HCT116 (cell line): ENCODE measurements at regions of chr22 and their contacts with region 1.

Region 1: DNA sequence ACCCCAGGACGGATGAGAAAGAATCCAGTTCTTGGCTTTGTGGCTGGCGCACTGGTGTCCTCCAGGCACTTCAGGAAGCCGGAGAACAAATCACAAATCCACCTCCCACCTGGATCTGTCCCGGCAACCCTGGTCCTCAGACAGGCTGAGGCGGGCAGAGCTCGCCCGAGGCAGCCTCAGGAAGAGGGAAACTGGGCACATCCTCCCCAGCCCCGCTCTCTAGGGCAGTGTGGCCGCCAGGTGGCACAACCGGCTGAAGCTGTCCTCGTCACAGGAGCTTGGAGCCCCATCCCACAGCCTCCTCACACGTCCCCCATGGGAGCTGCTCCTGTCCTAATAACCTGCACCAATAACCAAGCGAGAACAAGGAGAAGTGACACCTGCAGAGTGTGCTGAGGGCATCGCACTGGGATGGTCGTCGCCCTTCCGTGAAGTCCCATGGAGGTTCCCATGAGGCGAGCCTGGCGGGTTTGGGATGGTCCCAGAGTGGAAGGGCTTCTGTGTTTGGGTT is 393.5 kb downstream of the BRD1 start:
- DNase-seq: no peak
- ATAC-seq: peak; percentile 91
- H3K4me3 ChIP-seq: no peak overlapping the region
- H3K27ac ChIP-seq: no peak overlapping the region
- H3K4me1 ChIP-seq: no peaks in the 10 kb centered on the region
- H3K27me3 ChIP-seq: peaks cover 3% of the 10 kb centered on the region; the same call in 1 of the 2 replicates
- CTCF ChIP-seq: peak; percentile 33 to 48 (median 48); a peak in 5 of 6 replicates
- POLR2A ChIP-seq: no peak
- RAD21 ChIP-seq: peak; percentile 60

Region 2: GRCh38 chr22:49372530-49373288 is 61.4 kb before region 1 on chr22:
- CTCF ChIA-PET with region 1: no interaction called
- POLR2A ChIA-PET with region 1: no interaction called
- RAD21 ChIA-PET with region 1: no interaction called
- intact Hi-C with region 1: no loop called
- DNase-seq: peak; percentile 83
- ATAC-seq: peak; percentile 97
- H3K4me3 ChIP-seq: peak overlapping the region; percentile 35 to 48
- H3K27ac ChIP-seq: peak overlapping the region; percentile 77
- H3K4me1 ChIP-seq: peaks cover 23 to 35% of the 10 kb centered on the region in 2 experiments
- H3K27me3 ChIP-seq: no peaks in the 10 kb centered on the region
- CTCF ChIP-seq: no peak
- POLR2A ChIP-seq: no peak
- RAD21 ChIP-seq: no peak; the same call in 1 of the 2 replicates

Region 3: GRCh38 chr22:49394116-49394785 is 39.9 kb before region 1 on chr22:
- CTCF ChIA-PET with region 1: no interaction called
- POLR2A ChIA-PET with region 1: no interaction called
- RAD21 ChIA-PET with region 1: no interaction called
- intact Hi-C with region 1: no loop called
- DNase-seq: peak; percentile 12
- ATAC-seq: peak; percentile 59
- H3K4me3 ChIP-seq: no peak overlapping the region
- H3K27ac ChIP-seq: no peak overlapping the region
- H3K4me1 ChIP-seq: peaks cover 0 to 5% of the 10 kb centered on the region in 2 experiments; a peak in 2 of 4 replicates
- H3K27me3 ChIP-seq: no peaks in the 10 kb centered on the region
- CTCF ChIP-seq: no peak
- POLR2A ChIP-seq: no peak
- RAD21 ChIP-seq: no peak

Region 4: GRCh38 chr22:49532869-49533765 is 99.0 kb after region 1 on chr22:
- CTCF ChIA-PET with region 1: no interaction called
- POLR2A ChIA-PET with region 1: no interaction called
- RAD21 ChIA-PET with region 1: no interaction called
- intact Hi-C with region 1: loop called (anchors 10 kb)
- DNase-seq: no peak
- ATAC-seq: no peak
- H3K4me3 ChIP-seq: no peak overlapping the region
- H3K27ac ChIP-seq: no peak overlapping the region
- H3K4me1 ChIP-seq: no peaks in the 10 kb centered on the region
- H3K27me3 ChIP-seq: no peaks in the 10 kb centered on the region
- CTCF ChIP-seq: no peak
- POLR2A ChIP-seq: no peak
- RAD21 ChIP-seq: no peak

Region 5: DNA sequence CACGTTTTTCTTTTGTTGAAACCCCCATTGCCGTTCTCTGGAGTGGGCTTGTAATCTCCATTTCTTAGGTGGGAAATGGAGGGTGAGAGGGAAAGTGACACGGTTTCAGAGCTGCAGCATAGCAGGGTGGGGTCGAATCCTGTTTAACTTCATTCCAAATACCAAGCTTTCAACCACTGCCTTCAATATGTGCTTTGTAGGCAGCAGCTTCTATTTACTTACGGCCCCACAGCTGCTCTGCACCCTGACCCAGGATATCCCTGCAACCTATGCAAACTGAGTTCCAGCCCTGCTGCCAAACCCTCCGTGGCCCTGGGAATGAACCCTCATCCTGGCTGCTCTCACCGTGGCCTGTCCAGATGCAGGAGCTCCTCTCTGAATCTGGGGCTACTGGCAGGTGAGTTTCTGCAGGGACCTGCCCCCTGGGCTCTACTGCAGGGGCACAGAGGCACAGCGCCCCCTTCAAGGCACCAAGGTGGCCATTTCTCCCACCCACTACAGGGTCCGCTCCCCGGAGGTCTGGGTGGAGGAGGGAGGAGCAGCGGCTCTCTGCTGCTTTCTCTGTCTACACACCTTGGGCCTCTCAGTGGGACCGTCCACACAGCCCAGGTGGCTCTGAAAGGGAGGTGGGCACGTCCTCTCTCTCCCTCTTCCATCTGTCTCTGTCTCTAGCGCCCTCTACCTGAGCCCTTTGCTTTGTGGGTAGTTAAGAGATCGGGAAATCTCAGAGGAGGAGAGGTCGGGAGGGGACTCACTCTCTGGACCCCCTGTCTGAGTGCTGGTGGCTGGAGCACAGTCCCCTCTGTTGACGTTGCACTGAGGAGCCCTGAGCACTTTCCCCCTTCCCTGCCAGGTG is 114.4 kb after region 1 on chr22:
- CTCF ChIA-PET with region 1: interaction called, 17 read pairs
- POLR2A ChIA-PET with region 1: no interaction called
- RAD21 ChIA-PET with region 1: interaction called in 1 of 2 experiments, 3 read pairs
- intact Hi-C with region 1: no loop called
- DNase-seq: no peak
- ATAC-seq: peak; percentile 46; the same call in 1 of the 2 replicates
- H3K4me3 ChIP-seq: no peak overlapping the region
- H3K27ac ChIP-seq: no peak overlapping the region
- H3K4me1 ChIP-seq: no peaks in the 10 kb centered on the region
- H3K27me3 ChIP-seq: no peaks in the 10 kb centered on the region
- CTCF ChIP-seq: peak; percentile 29 to 41 (median 30); a peak in 1 of 6 replicates
- POLR2A ChIP-seq: no peak
- RAD21 ChIP-seq: peak; percentile 33

Region 6: DNA sequence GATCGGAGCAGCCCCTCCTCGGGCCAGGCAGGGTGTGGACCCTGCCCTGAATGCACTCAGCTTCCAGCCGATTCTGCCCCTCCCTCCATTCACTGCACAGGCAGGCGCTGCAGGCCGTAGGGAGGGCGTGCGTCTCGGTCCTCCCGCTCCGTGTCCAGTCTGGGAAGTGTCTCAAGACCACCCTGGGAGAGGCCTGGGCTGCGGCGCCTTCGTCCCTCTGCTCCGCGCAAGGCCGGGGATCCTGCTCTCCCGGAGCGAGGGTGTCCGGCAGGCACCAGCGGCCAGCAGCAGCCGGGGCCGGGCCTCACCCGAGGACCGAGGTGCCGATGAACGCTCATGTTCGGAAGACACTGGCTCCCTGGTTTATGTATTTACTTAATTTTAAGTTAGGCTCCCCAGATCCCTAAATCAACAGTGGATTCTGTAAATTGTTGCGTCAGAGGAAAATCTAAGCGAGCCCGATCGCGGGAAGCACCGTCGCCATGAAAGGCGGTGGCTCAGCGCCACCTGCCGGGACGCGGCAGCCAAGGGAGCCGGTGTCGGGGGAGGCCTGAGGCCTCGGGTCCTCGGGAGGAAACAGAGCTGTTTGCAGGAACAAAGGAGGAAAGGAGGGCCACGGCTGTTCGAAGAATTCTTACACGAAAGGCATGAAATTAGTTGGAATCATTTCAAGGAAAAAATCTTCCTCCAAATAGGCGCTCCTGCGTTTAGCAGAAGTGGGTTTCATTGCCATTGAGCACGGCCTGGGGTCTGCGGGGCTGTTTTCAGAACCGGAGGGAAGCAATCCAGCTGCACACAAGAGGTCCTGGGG is 198.2 kb after region 1 on chr22:
- CTCF ChIA-PET with region 1: interaction called, 11 read pairs
- POLR2A ChIA-PET with region 1: no interaction called
- RAD21 ChIA-PET with region 1: interaction called in 1 of 2 experiments, 3 read pairs
- intact Hi-C with region 1: loop called (anchors 1 kb)
- DNase-seq: peak; percentile 7
- ATAC-seq: peak; percentile 75
- H3K4me3 ChIP-seq: peak overlapping the region; percentile 21 to 30
- H3K27ac ChIP-seq: no peak overlapping the region
- H3K4me1 ChIP-seq: no peaks in the 10 kb centered on the region
- H3K27me3 ChIP-seq: no peaks in the 10 kb centered on the region
- CTCF ChIP-seq: peak; percentile 32 to 75 (median 71); a peak in 5 of 6 replicates
- POLR2A ChIP-seq: no peak
- RAD21 ChIP-seq: peak; percentile 72